ENCODE measurements at regions of chr14 and their contacts with region 1.

Region 1: DNA sequence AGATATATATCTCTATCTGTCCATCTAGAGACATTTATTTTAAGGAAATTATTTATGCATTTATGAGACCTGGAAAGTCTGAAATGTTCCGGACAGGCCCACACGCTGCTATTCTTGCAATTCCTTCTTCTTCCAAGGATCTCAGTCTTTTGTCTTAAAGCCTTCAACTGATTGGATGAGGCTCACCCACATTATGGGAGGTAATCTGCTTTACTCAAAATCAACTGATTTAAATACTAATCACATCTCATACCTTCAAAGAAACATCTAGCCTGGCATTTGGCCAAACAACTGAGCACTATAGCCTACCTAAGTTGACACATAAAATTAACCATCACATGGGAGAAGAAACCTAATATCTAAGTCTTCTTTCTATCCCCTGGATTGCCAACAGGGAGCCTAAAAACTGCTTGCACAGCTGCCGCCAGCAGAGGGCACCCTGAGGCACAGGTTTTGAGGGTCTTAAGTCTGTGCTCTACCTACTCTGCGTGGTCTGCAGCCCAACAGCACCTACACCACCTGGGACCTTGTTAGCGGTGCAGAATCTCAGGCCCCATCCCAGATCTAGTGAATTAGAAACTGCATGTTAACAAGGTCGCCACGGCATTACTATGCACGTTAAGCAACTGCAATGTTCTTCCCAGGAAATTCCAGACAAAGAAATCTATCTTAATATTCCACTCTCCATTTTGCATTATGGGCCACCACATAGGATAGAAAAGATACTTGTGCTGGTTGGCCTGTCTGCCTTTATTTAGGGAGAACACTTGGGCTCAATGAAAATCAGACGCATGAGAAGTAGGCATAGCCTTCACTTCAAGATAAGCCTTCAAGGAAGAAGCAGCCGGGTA is 249.7 kb downstream of the FOXG1 start:
- DNase-seq: peak; percentile 78
- ATAC-seq: peak; percentile 99
- H3K4me3 ChIP-seq: no peak overlapping the region
- H3K27ac ChIP-seq: no peak overlapping the region
- H3K4me1 ChIP-seq: no peaks in the 10 kb centered on the region
- H3K27me3 ChIP-seq: no peaks in the 10 kb centered on the region
- CTCF ChIP-seq: peak; percentile 98
- EP300 ChIP-seq: no peak
- POLR2A ChIP-seq: no peak
- RAD21 ChIP-seq: peak; percentile 96

Region 2: GRCh38 chr14:28975084-28975483 is 41.2 kb before region 1 on chr14:
- CTCF ChIA-PET with region 1: no interaction called
- POLR2A ChIA-PET with region 1: no interaction called
- in situ Hi-C with region 1: no loop called
- intact Hi-C with region 1: no loop called
- DNase-seq: no peak
- ATAC-seq: no peak
- H3K4me3 ChIP-seq: no peak overlapping the region
- H3K27ac ChIP-seq: no peak overlapping the region
- H3K4me1 ChIP-seq: no peaks in the 10 kb centered on the region
- H3K27me3 ChIP-seq: no peaks in the 10 kb centered on the region
- CTCF ChIP-seq: no peak
- EP300 ChIP-seq: no peak
- POLR2A ChIP-seq: no peak
- RAD21 ChIP-seq: no peak

Region 3: GRCh38 chr14:29085546-29085945 is 69.3 kb after region 1 on chr14:
- CTCF ChIA-PET with region 1: interaction called, 5 read pairs
- POLR2A ChIA-PET with region 1: no interaction called
- in situ Hi-C with region 1: no loop called
- intact Hi-C with region 1: loop called (anchors 5 kb)
- DNase-seq: peak; percentile 39
- ATAC-seq: peak; percentile 99
- H3K4me3 ChIP-seq: no peak overlapping the region
- H3K27ac ChIP-seq: no peak overlapping the region
- H3K4me1 ChIP-seq: no peaks in the 10 kb centered on the region
- H3K27me3 ChIP-seq: no peaks in the 10 kb centered on the region
- CTCF ChIP-seq: 0 out of 2 replicates have a peak, but pooled peaks have one; percentile 9
- EP300 ChIP-seq: no peak
- POLR2A ChIP-seq: no peak
- RAD21 ChIP-seq: no peak

Region 4: DNA sequence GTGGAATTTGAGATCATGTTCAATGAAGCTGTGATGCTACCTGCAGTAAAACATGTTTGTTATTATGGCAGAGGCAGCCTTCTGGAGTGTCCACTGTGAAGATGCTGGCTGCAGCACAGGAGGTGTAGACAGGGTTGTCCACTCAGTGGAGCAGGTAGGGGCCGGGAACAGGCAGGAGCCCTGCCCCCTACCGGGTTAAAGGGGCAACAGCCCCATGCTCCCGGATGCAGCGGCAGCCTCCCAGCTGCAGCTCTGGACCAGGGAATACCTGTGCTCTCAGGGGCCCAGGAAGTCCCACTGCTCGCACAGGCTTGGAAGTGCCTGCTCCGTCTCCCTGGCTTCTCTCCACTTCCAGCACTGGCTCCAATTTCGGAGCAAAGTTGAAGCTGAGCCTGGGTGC is 151.9 kb after region 1 on chr14:
- CTCF ChIA-PET with region 1: interaction called, 3 read pairs
- POLR2A ChIA-PET with region 1: no interaction called
- in situ Hi-C with region 1: no loop called
- intact Hi-C with region 1: loop called (anchors 2 kb)
- DNase-seq: peak; percentile 16
- ATAC-seq: peak; percentile 99
- H3K4me3 ChIP-seq: no peak overlapping the region
- H3K27ac ChIP-seq: no peak overlapping the region
- H3K4me1 ChIP-seq: no peaks in the 10 kb centered on the region
- H3K27me3 ChIP-seq: no peaks in the 10 kb centered on the region
- CTCF ChIP-seq: peak; percentile 69
- EP300 ChIP-seq: no peak
- POLR2A ChIP-seq: no peak
- RAD21 ChIP-seq: no peak

Region 5: GRCh38 chr14:29222671-29223268 is 206.5 kb after region 1 on chr14:
- CTCF ChIA-PET with region 1: interaction called, 48 read pairs
- POLR2A ChIA-PET with region 1: no interaction called
- in situ Hi-C with region 1: loop called (anchors 5 kb)
- intact Hi-C with region 1: loop called (anchors 1 kb)
- DNase-seq: peak; percentile 63
- ATAC-seq: peak; percentile 91
- H3K4me3 ChIP-seq: no peak overlapping the region
- H3K27ac ChIP-seq: no peak overlapping the region
- H3K4me1 ChIP-seq: no peaks in the 10 kb centered on the region
- H3K27me3 ChIP-seq: no peaks in the 10 kb centered on the region
- CTCF ChIP-seq: peak; percentile 82
- EP300 ChIP-seq: no peak
- POLR2A ChIP-seq: no peak
- RAD21 ChIP-seq: no peak

Region 6: GRCh38 chr14:29521526-29522137 is 505.4 kb after region 1 on chr14:
- CTCF ChIA-PET with region 1: no interaction called
- POLR2A ChIA-PET with region 1: no interaction called
- in situ Hi-C with region 1: no loop called
- intact Hi-C with region 1: loop called (anchors 5 kb)
- DNase-seq: no peak
- ATAC-seq: peak; percentile 68
- H3K4me3 ChIP-seq: no peak overlapping the region
- H3K27ac ChIP-seq: no peak overlapping the region
- H3K4me1 ChIP-seq: no peaks in the 10 kb centered on the region
- H3K27me3 ChIP-seq: no peaks in the 10 kb centered on the region
- CTCF ChIP-seq: peak; percentile 65
- EP300 ChIP-seq: no peak
- POLR2A ChIP-seq: no peak
- RAD21 ChIP-seq: no peak

Region 7: DNA sequence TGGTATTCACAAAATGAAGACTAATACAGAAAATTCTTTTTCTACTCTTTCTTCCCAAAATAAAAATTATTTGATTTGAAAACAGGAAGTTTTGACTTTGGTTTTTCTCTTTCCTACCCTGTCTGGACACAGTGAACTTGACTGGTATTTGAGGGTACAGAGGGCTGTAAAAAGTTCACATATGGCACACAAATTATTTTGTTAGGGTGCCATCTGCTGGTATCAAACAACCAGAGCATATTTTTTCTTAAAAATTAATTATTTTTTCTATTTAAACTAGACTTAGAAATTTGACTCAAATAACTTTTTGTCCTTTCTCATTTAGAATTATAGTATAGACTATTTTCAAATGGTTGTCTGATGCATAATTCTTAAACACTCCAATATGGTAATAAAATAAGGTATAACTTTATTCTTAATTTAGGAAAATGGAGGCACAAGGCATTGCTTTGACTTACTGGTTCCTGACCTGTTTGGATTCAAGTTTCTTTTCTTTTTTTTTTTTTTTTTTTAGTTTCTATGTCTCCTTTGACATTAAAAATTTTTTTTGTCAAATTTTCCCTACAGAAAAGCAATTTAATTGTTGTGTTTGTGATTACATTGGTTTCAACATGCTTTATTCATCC is 520.7 kb after region 1 on chr14:
- CTCF ChIA-PET with region 1: interaction called, 15 read pairs
- POLR2A ChIA-PET with region 1: no interaction called
- in situ Hi-C with region 1: no loop called
- intact Hi-C with region 1: loop called (anchors 5 kb)
- DNase-seq: peak; percentile 25
- ATAC-seq: peak; percentile 27; the same call in 1 of the 3 replicates
- H3K4me3 ChIP-seq: no peak overlapping the region
- H3K27ac ChIP-seq: no peak overlapping the region
- H3K4me1 ChIP-seq: no peaks in the 10 kb centered on the region
- H3K27me3 ChIP-seq: no peaks in the 10 kb centered on the region
- CTCF ChIP-seq: peak; percentile 31; the same call in 1 of the 2 replicates
- EP300 ChIP-seq: no peak
- POLR2A ChIP-seq: no peak
- RAD21 ChIP-seq: no peak

Region 8: GRCh38 chr14:30214461-30215090 is 1198.3 kb after region 1 on chr14:
- CTCF ChIA-PET with region 1: interaction called, 3 read pairs
- POLR2A ChIA-PET with region 1: no interaction called
- in situ Hi-C with region 1: loop called (anchors 10 kb)
- intact Hi-C with region 1: loop called (anchors 1 kb)
- DNase-seq: peak; percentile 75
- ATAC-seq: peak; percentile 91
- H3K4me3 ChIP-seq: no peak overlapping the region
- H3K27ac ChIP-seq: no peak overlapping the region
- H3K4me1 ChIP-seq: no peaks in the 10 kb centered on the region
- H3K27me3 ChIP-seq: no peaks in the 10 kb centered on the region
- CTCF ChIP-seq: peak; percentile 87
- EP300 ChIP-seq: no peak
- POLR2A ChIP-seq: no peak
- RAD21 ChIP-seq: peak; percentile 79